ENCODE measurements at regions of chr16 and their contacts with region 1.

Region 1: GRCh38 chr16:21083729-21084268 is 66.8 kb downstream of the DNAH3 start:
- DNase-seq: peak in 5 of 6 donors; percentile 19 to 78 (median 57)
- ATAC-seq: peak; percentile 68 to 94 (median 93)
- H3K4me3 ChIP-seq: no peak overlapping the region
- H3K27ac ChIP-seq: no peak overlapping the region
- H3K4me1 ChIP-seq: no peaks in the 10 kb centered on the region
- H3K27me3 ChIP-seq: no peaks in the 10 kb centered on the region
- CTCF ChIP-seq: peak; percentile 35 to 58 (median 54)

Region 2: GRCh38 chr16:20611975-20612481 is 471.8 kb before region 1 on chr16:
- intact Hi-C with region 1: no loop called
- DNase-seq: peak; percentile 86 to 95 (median 89)
- ATAC-seq: peak; percentile 63 to 79 (median 72)
- H3K4me3 ChIP-seq: no peak overlapping the region
- H3K27ac ChIP-seq: peak overlapping the region; percentile 70 to 85 (median 83)
- H3K4me1 ChIP-seq: peaks cover 4 to 15% (median 7%) of the 10 kb centered on the region in 3 donors
- H3K27me3 ChIP-seq: no peaks in the 10 kb centered on the region
- CTCF ChIP-seq: no peak

Region 3: DNA sequence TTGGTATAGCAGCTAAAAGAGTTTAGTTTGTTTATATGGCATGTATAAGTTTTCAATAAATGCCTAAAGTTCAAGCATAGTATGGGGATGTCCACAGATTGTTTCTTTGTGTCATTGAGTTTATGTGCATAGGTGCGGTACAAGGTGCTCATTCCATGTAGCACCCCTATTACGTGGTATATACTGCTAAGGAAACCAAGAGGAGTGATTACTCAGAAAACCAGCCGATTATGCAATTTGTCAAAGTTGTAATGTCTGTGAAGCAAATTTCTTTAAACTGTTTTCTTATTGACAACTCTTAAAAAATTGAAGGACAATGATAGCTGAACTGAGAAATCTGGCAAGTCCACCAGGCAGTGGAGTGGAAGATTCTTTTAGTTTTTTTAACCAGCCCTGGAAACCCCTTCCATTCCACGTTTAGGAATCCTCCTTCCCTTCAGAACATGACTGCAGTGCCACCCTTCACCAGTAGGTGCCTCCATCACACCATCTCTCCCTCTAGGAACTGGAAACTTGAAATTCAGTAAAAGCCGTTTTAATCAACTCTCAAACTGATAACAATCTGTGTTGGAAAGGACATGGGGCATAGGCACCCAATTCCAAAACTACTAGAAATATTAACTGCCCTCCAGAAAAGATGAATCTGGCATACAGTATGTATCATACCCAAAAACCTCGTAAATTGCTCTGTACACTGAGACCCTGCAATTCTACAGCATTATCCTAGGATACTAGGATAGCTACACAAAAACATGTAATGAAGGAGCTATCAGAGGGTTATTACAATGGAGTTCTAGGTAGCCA is 234.0 kb before region 1 on chr16:
- intact Hi-C with region 1: loop called in 2 of 3 experiments (anchors 5 kb)
- DNase-seq: peak in 5 of 6 donors; percentile 41 to 85 (median 55)
- ATAC-seq: peak; percentile 65 to 91 (median 87)
- H3K4me3 ChIP-seq: no peak overlapping the region
- H3K27ac ChIP-seq: no peak overlapping the region
- H3K4me1 ChIP-seq: peaks cover 5 to 14% (median 5%) of the 10 kb centered on the region in 3 donors
- H3K27me3 ChIP-seq: no peaks in the 10 kb centered on the region
- CTCF ChIP-seq: peak; percentile 81 to 96 (median 92)

Region 4: GRCh38 chr16:20944861-20945574 is 138.8 kb before region 1 on chr16:
- intact Hi-C with region 1: loop called in 1 of 3 experiments (anchors 10 kb)
- DNase-seq: no peak
- ATAC-seq: peak in 1 of 4 donors; percentile 25
- H3K4me3 ChIP-seq: no peak overlapping the region
- H3K27ac ChIP-seq: no peak overlapping the region
- H3K4me1 ChIP-seq: no peaks in the 10 kb centered on the region
- H3K27me3 ChIP-seq: no peaks in the 10 kb centered on the region
- CTCF ChIP-seq: no peak